Right cardiac atrium (tissue), 5 donors: ENCODE measurements at regions of chr1 and their contacts with region 1.

Region 1: DNA sequence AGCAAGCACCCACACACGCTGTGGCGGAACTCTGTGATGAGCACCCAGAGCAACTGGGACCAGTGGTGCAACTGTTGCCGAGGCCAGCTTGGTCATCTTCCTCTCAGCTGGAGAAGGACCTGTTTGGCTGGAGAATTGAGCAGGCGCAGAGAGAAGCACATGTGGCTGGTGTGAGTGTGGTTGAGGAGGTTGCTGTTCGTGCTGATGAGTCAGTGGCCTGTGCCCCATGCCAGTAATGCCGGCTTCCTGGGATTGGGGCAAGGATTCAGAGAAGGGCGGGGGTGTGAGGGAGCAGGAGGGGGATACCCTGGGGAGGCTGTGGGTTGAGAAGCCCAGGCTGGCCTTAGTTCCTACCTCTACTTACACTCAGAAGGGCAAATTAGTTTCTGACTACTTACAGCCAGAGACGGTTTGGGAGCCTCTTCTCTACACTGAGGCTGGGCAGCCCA is 57.5 kb upstream of the EPS8L3 start:
- DNase-seq: peak; percentile 70 to 78 (median 72)
- ATAC-seq: peak; percentile 10 to 12
- H3K4me3 ChIP-seq: no peak overlapping the region
- H3K27ac ChIP-seq: no peak overlapping the region
- H3K4me1 ChIP-seq: peaks cover 34% of the 10 kb centered on the region
- H3K27me3 ChIP-seq: no peaks in the 10 kb centered on the region

Region 2: GRCh38 chr1:109213785-109214468 is 607.3 kb before region 1 on chr1 and contains the start of gene SARS1:
- intact Hi-C with region 1: no loop called
- DNase-seq: peak; percentile 90 to 96 (median 95)
- ATAC-seq: peak; percentile 96
- H3K4me3 ChIP-seq: peak within 1 kb of the TSS; percentile 77
- H3K27ac ChIP-seq: peak within 1 kb of the TSS; percentile 89
- H3K4me1 ChIP-seq: no peaks in the 10 kb centered on the region
- H3K27me3 ChIP-seq: no peaks in the 10 kb centered on the region
- total RNA-seq, gene SARS1: 123 to 146 (median 135) TPM

Region 3: GRCh38 chr1:109773146-109773899 is 47.9 kb before region 1 on chr1:
- intact Hi-C with region 1: no loop called
- DNase-seq: peak; percentile 85 to 92 (median 92)
- ATAC-seq: peak; percentile 86 to 87
- H3K4me3 ChIP-seq: no peak overlapping the region
- H3K27ac ChIP-seq: no peak overlapping the region
- H3K4me1 ChIP-seq: no peaks in the 10 kb centered on the region
- H3K27me3 ChIP-seq: no peaks in the 10 kb centered on the region

Region 4: GRCh38 chr1:109895720-109896504 is 74.7 kb after region 1 on chr1:
- intact Hi-C with region 1: loop called in 1 of 4 experiments (anchors 10 kb)
- DNase-seq: peak; percentile 73 to 79 (median 77)
- ATAC-seq: peak; percentile 67 to 91
- H3K4me3 ChIP-seq: no peak overlapping the region
- H3K27ac ChIP-seq: peak overlapping the region; percentile 77
- H3K4me1 ChIP-seq: peaks cover 23% of the 10 kb centered on the region
- H3K27me3 ChIP-seq: no peaks in the 10 kb centered on the region

Region 5: GRCh38 chr1:109910123-109910962 is 89.1 kb after region 1 on chr1 and contains the start of gene CSF1:
- intact Hi-C with region 1: no loop called
- DNase-seq: peak; percentile 82 to 93 (median 92)
- ATAC-seq: peak; percentile 82 to 84
- H3K4me3 ChIP-seq: peak within 1 kb of the TSS; percentile 86
- H3K27ac ChIP-seq: peak within 1 kb of the TSS; percentile 76
- H3K4me1 ChIP-seq: peaks cover 26% of the 10 kb centered on the region
- H3K27me3 ChIP-seq: no peaks in the 10 kb centered on the region
- total RNA-seq, gene CSF1: 13.9 to 22.6 (median 19.4) TPM